Pancreas (tissue), 10 donors: ENCODE measurements at regions of chr13 and their contacts with region 1.

Region 1: GRCh38 chr13:89382981-89383380 is 1711.8 kb downstream of the SLITRK5 start:
- DNase-seq: no peak
- ATAC-seq: no peak
- H3K4me3 ChIP-seq: no peak overlapping the region
- H3K27ac ChIP-seq: no peak overlapping the region
- H3K4me1 ChIP-seq: no peaks in the 10 kb centered on the region
- H3K27me3 ChIP-seq: no peaks in the 10 kb centered on the region
- CTCF ChIP-seq: no peak

Region 2: DNA sequence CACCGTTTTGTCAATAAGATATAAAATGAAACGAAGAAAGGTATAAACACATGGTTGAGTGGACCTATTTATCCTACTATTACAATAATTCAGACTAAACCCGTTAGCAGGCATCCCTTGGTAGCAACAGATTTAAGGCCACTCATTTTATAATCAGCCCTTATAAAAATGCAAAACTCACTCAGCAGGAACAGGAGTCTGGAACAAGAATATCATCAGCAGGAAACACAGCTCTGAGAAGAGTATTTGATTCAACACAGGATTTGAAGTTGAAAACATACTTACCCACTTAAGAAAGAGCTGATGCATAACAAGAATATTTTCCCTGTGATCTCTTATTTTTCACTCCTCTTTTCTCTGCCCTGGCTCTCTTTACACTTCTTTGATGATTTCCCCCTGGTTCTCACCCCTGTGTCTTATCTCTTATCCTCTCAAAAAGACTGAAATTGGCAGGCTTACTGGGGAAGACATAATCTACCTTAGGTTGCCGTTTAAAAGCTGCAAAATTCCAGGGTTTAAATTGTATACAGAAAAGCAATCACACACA is 10.8 kb after region 1 on chr13:
- intact Hi-C with region 1: loop called in 1 of 3 experiments (anchors 1 kb)
- DNase-seq: no peak
- ATAC-seq: no peak
- H3K4me3 ChIP-seq: no peak overlapping the region
- H3K27ac ChIP-seq: no peak overlapping the region
- H3K4me1 ChIP-seq: no peaks in the 10 kb centered on the region
- H3K27me3 ChIP-seq: no peaks in the 10 kb centered on the region
- CTCF ChIP-seq: no peak